ENCODE measurements at regions of chr17 and their contacts with region 1.

Region 1: DNA sequence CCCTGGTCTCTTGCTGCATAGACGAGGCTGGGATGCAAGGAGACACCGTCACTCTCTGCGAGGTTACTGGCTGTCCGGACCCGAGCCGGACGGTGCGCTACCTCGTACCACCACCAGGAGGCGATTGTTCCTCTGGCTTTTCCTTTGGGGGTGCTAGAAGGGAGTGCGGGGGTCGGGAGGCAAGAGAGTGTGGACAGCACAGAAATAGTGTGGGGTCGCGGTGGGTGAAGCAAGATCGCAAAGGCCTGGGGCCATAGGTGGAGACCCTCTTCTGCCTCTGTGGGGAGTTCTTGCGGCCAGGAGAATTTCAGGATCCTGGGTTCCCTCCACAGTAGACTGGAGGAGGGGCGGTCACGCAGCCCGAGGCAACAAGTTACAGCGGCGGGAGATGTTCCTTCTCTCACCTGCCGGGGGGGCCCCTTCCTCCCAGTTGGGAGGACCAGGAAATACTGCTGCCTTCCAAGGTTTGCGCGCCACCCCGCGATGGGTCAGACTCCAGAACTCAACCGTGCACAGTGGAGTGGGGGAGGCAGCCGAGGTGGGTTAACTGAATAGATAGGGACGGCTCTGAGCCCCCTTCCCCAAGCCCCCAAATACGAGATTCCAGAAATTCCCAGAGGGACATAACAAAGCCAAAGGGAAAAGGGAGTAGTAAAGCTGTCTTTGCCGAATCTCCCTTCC is 6.9 kb downstream of the PHOSPHO1 start:
- DNase-seq: no peak
- H3K4me3 ChIP-seq: no peak overlapping the region
- H3K27ac ChIP-seq: no peak overlapping the region
- H3K4me1 ChIP-seq: peaks cover 11% of the 10 kb centered on the region
- H3K27me3 ChIP-seq: peaks cover 16 to 22% of the 10 kb centered on the region in 2 experiments
- CTCF ChIP-seq: peak; percentile 78 to 83
- POLR2A ChIP-seq: no peak

Region 2: GRCh38 chr17:49210158-49211029 is 13.3 kb before region 1 on chr17 and contains the starts of genes ABI3 and GNGT2:
- CTCF ChIA-PET with region 1: interaction called, 24 read pairs
- POLR2A ChIA-PET with region 1: no interaction called
- dilution Hi-C with region 1: no loop called
- intact Hi-C with region 1: no loop called
- DNase-seq: peak; percentile 87
- H3K4me3 ChIP-seq: peak within 1 kb of the TSS; percentile 47 to 74 (median 59)
- H3K27ac ChIP-seq: peak within 1 kb of the TSS; percentile 73
- H3K4me1 ChIP-seq: peaks cover 62% of the 10 kb centered on the region
- H3K27me3 ChIP-seq: no peaks in the 10 kb centered on the region
- CTCF ChIP-seq: no peak
- POLR2A ChIP-seq: peak; percentile 64
- total RNA-seq, gene ABI3: 35.2 and 35.7 TPM in 2 replicates
- total RNA-seq, gene GNGT2: 3.7 and 3.8 TPM in 2 replicates

Region 3: DNA sequence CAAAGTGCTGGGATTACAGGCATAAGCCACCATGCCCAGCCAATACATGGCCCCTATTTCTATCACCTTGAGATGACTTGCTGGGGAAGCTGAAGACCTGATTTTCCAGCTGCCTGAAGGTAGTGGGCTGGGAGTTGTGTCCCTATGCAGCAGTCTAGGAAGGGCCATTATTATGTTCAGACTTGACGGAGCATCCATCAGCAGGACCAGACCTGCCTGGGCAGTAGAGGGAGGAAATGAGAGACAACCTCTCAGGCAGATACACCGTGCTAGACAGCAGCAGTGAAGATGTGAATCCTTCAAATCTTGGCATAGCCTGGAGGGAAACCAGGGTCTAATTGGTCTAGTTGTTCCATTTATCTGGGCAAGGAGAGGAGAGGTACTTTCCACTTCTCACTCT is 42.6 kb after region 1 on chr17:
- CTCF ChIA-PET with region 1: no interaction called
- POLR2A ChIA-PET with region 1: no interaction called
- dilution Hi-C with region 1: no loop called
- intact Hi-C with region 1: no loop called
- DNase-seq: no peak
- H3K4me3 ChIP-seq: no peak overlapping the region
- H3K27ac ChIP-seq: no peak overlapping the region
- H3K4me1 ChIP-seq: no peaks in the 10 kb centered on the region
- H3K27me3 ChIP-seq: peaks cover 0 to 1% of the 10 kb centered on the region in 2 experiments
- CTCF ChIP-seq: no peak
- POLR2A ChIP-seq: no peak